Natural killer cell (primary cell): ENCODE measurements at regions of chr10 and their contacts with region 1.

Region 1: GRCh38 chr10:17228091-17228940 is at the start of gene VIM:
- DNase-seq: peak; percentile 82 to 91
- ATAC-seq: peak; percentile 48 to 60 (median 54)
- H3K4me3 ChIP-seq: peak within 1 kb of the TSS; percentile 93
- H3K4me3 Mint-ChIP-seq: peak within 1 kb of the TSS; percentile 98
- H3K27ac ChIP-seq: peak within 1 kb of the TSS; percentile 99
- H3K27ac Mint-ChIP-seq: peak within 1 kb of the TSS; percentile 96 to 99
- H3K4me1 ChIP-seq: peaks cover 15% of the 10 kb centered on the region
- H3K4me1 Mint-ChIP-seq: peaks cover 42 to 60% of the 10 kb centered on the region in 2 donors
- H3K27me3 ChIP-seq: no peaks in the 10 kb centered on the region
- H3K27me3 Mint-ChIP-seq: no peaks in the 10 kb centered on the region
- CTCF ChIP-seq: no peak
- total RNA-seq, gene VIM: 627 to 717 (median 634) TPM

Region 2: GRCh38 chr10:17003151-17003550 is 225.2 kb before region 1 on chr10:
- intact Hi-C with region 1: loop called (anchors 1 kb)
- DNase-seq: peak; percentile 51 to 88
- ATAC-seq: peak; percentile 92 to 98 (median 95)
- H3K4me3 ChIP-seq: no peak overlapping the region
- H3K4me3 Mint-ChIP-seq: peak overlapping the region; percentile 17
- H3K27ac ChIP-seq: no peak overlapping the region
- H3K27ac Mint-ChIP-seq: peak overlapping the region; percentile 61 to 84
- H3K4me1 ChIP-seq: peaks cover 11% of the 10 kb centered on the region
- H3K4me1 Mint-ChIP-seq: peaks cover 23 to 25% of the 10 kb centered on the region in 2 donors
- H3K27me3 ChIP-seq: peaks cover 7% of the 10 kb centered on the region
- H3K27me3 Mint-ChIP-seq: peaks cover 59 to 81% of the 10 kb centered on the region in 2 donors
- CTCF ChIP-seq: no peak

Region 3: DNA sequence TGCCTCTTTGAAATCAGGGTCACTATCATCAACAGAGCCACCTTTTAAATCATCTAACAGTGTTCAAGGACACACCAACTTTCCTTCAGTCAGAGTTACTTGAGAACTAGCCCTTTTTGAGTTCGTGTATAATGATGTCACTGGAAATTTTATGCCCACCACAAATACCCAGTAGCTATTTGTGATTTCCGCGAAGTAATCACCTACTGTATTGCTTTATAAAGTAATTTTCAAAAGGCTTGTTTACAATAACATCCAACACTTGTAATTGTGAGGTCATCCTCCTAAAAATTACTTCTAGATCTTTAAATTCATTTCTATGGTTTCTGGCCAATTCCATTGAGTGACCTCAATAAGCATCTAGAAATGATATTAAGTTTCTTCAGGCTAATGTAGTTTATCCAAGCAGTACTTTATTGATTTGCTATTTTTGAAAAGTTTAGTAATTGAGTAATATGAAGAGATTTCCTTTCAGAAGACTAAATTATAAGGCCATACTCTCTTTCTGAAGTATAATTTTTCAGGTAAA is 39.6 kb before region 1 on chr10:
- intact Hi-C with region 1: loop called (anchors 5 kb)
- DNase-seq: no peak
- ATAC-seq: no peak
- H3K4me3 ChIP-seq: no peak overlapping the region
- H3K4me3 Mint-ChIP-seq: no peak overlapping the region
- H3K27ac ChIP-seq: no peak overlapping the region
- H3K27ac Mint-ChIP-seq: no peak overlapping the region
- H3K4me1 ChIP-seq: no peaks in the 10 kb centered on the region
- H3K4me1 Mint-ChIP-seq: peaks cover 0 to 1% of the 10 kb centered on the region in 2 donors
- H3K27me3 ChIP-seq: no peaks in the 10 kb centered on the region
- H3K27me3 Mint-ChIP-seq: no peaks in the 10 kb centered on the region
- CTCF ChIP-seq: no peak

Region 4: GRCh38 chr10:17206210-17206709 is 22.1 kb before region 1 on chr10:
- intact Hi-C with region 1: loop called (anchors 1 kb)
- DNase-seq: peak in 1 of 2 donors; percentile 82
- ATAC-seq: peak; percentile 68 to 70 (median 69)
- H3K4me3 ChIP-seq: no peak overlapping the region
- H3K4me3 Mint-ChIP-seq: no peak overlapping the region
- H3K27ac ChIP-seq: peak overlapping the region; percentile 65
- H3K27ac Mint-ChIP-seq: peak overlapping the region; percentile 88 to 93
- H3K4me1 ChIP-seq: peaks cover 18% of the 10 kb centered on the region
- H3K4me1 Mint-ChIP-seq: peaks cover 19 to 23% of the 10 kb centered on the region in 2 donors
- H3K27me3 ChIP-seq: no peaks in the 10 kb centered on the region
- H3K27me3 Mint-ChIP-seq: no peaks in the 10 kb centered on the region
- CTCF ChIP-seq: no peak

Region 5: DNA sequence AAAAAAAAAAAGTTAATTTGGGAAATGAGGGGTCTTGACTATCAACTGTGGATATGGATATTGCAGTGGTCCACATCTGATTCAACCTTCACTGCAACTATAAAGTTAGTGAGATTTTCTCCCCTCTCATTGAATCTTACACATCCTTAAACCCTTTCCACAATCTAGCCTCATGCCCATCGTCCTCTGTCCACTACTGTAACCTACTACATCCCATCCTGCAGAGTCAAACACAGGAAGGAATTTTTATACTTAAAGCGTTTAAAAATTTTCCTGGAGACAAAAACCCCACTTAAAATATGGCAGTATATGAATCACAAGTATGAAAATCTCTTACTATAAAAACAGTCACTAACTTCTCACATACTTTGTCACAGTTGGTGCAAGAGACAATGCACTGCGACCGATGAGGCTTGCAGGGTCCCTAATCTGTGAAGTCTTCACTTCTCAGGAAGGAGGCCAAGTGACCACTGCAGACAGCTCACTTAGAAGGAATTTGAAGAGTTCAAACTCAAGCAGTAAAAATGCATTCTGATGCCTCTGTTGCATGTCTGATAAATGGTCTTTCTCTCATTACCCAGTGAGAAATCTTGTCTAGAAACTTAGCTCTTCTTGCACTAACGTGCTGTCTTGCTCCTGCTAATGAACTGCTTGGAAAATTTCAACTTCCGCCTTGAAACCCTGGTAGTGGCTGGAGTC is 276.4 kb after region 1 on chr10:
- intact Hi-C with region 1: loop called (anchors 10 kb)
- DNase-seq: no peak
- ATAC-seq: no peak
- H3K4me3 ChIP-seq: no peak overlapping the region
- H3K4me3 Mint-ChIP-seq: peak overlapping the region; percentile 67
- H3K27ac ChIP-seq: peak overlapping the region; percentile 1
- H3K27ac Mint-ChIP-seq: peak overlapping the region; percentile 77 to 96
- H3K4me1 ChIP-seq: peaks cover 52% of the 10 kb centered on the region
- H3K4me1 Mint-ChIP-seq: peaks cover 68 to 74% of the 10 kb centered on the region in 2 donors
- H3K27me3 ChIP-seq: no peaks in the 10 kb centered on the region
- H3K27me3 Mint-ChIP-seq: no peaks in the 10 kb centered on the region
- CTCF ChIP-seq: no peak